Ascending aorta (tissue), 2 donors: ENCODE measurements at regions of chr16 and their contacts with region 1.

Region 1: GRCh38 chr16:56866943-56867830 is 2.2 kb downstream of the SLC12A3 start:
- DNase-seq: peak in 1 of 2 donors; percentile 70
- H3K4me3 ChIP-seq: no peak overlapping the region
- H3K27ac ChIP-seq: no peak overlapping the region
- H3K4me1 ChIP-seq: peaks cover 0 to 4% of the 10 kb centered on the region in 2 donors
- H3K27me3 ChIP-seq: no peaks in the 10 kb centered on the region
- CTCF ChIP-seq: peak; percentile 65 to 81 (median 81)

Region 2: GRCh38 chr16:56814537-56815432 is 52.4 kb before region 1 on chr16:
- intact Hi-C with region 1: no loop called
- DNase-seq: no peak
- H3K4me3 ChIP-seq: no peak overlapping the region
- H3K27ac ChIP-seq: no peak overlapping the region
- H3K4me1 ChIP-seq: no peaks in the 10 kb centered on the region
- H3K27me3 ChIP-seq: no peaks in the 10 kb centered on the region
- CTCF ChIP-seq: no peak

Region 3: GRCh38 chr16:56950881-56951771 is 83.9 kb after region 1 on chr16:
- intact Hi-C with region 1: loop called (anchors 2 kb)
- DNase-seq: no peak
- H3K4me3 ChIP-seq: no peak overlapping the region
- H3K27ac ChIP-seq: no peak overlapping the region
- H3K4me1 ChIP-seq: peaks cover 0 to 1% of the 10 kb centered on the region in 2 donors
- H3K27me3 ChIP-seq: no peaks in the 10 kb centered on the region
- CTCF ChIP-seq: peak; percentile 24 to 47 (median 29)

Region 4: GRCh38 chr16:57045694-57046381 is 178.7 kb after region 1 on chr16:
- intact Hi-C with region 1: loop called (anchors 1 kb)
- DNase-seq: peak in 1 of 2 donors; percentile 87
- H3K4me3 ChIP-seq: peak overlapping the region in 1 of 2 donors; percentile 32
- H3K27ac ChIP-seq: no peak overlapping the region
- H3K4me1 ChIP-seq: no peaks in the 10 kb centered on the region
- H3K27me3 ChIP-seq: no peaks in the 10 kb centered on the region
- CTCF ChIP-seq: peak; percentile 31 to 71 (median 58)

Region 5: GRCh38 chr16:57167953-57168352 is 300.8 kb after region 1 on chr16:
- intact Hi-C with region 1: loop called (anchors 2 kb)
- DNase-seq: no peak
- H3K4me3 ChIP-seq: no peak overlapping the region
- H3K27ac ChIP-seq: no peak overlapping the region
- H3K4me1 ChIP-seq: no peaks in the 10 kb centered on the region
- H3K27me3 ChIP-seq: no peaks in the 10 kb centered on the region
- CTCF ChIP-seq: peak; percentile 22 to 63 (median 62)